BJ (cell line): ENCODE measurements at regions of chr14 and their contacts with region 1.

Region 1: GRCh38 chr14:20855652-20856291 is 35.4 kb upstream of the RNASE3 start:
- DNase-seq: no peak
- H3K4me3 ChIP-seq: no peak overlapping the region
- H3K27me3 ChIP-seq: peaks cover 6% of the 10 kb centered on the region; the same call in 1 of the 2 replicates
- CTCF ChIP-seq: peak; percentile 63

Region 2: DNA sequence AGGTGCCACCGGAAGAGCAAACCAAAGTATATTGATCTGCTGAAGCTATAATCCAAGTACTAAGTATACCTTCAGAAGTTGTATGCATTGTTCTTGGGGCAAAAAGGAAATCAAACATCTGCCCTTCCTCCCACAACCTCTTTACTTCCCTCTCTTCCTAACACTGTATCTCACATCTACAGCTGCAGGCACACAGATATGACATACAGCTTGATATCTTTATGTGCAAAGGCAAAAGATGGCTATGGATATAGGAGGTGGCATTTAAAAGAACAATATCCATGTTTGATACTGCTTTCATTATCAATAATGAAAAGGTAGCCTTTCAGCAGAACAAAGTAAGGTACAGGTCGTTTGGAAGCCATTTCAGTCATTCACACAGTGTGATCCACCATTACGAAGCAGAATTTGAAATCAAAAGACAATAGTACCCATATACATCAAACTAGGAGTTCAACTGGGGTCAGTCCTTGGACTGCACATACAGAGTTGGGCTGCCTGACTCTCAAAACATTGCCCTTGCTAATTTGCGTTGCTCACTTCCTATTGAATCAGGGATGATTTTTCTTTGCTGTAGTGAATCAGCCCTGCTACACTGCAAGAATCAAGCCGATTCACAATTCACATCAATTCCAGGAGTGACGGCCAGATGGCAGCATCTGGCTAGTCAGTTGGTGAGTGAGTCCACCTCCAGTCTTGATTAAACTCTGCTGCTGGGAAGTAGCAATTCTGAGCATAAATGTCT is 158.3 kb before region 1 on chr14:
- CTCF ChIA-PET with region 1: interaction called, 16 read pairs
- POLR2A ChIA-PET with region 1: no interaction called
- DNase-seq: no peak
- H3K4me3 ChIP-seq: no peak overlapping the region
- H3K27me3 ChIP-seq: no peaks in the 10 kb centered on the region
- CTCF ChIP-seq: peak; percentile 65

Region 3: DNA sequence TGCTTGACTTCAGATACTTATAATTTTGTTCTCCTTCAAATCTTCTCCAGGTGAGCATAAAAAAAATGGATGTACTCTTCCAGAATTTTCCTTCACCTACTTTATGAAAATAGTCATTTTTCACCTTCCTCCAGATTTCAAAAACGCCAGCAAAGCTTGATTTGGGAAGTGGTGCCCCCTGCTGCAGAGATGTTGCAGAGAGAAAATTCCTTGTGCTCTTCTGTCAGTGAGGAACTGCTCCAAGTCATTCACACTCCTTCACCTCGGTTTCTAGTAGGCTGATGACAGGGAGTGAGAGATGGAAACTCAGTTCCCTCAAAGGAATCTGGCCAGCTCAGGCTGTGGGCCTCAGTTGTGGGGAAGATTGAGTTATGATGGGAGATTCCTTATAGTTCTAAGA is 11.2 kb after region 1 on chr14:
- CTCF ChIA-PET with region 1: interaction called, 25 read pairs
- POLR2A ChIA-PET with region 1: no interaction called
- DNase-seq: no peak
- H3K4me3 ChIP-seq: no peak overlapping the region
- H3K27me3 ChIP-seq: no peaks in the 10 kb centered on the region
- CTCF ChIP-seq: peak; percentile 33

Region 4: DNA sequence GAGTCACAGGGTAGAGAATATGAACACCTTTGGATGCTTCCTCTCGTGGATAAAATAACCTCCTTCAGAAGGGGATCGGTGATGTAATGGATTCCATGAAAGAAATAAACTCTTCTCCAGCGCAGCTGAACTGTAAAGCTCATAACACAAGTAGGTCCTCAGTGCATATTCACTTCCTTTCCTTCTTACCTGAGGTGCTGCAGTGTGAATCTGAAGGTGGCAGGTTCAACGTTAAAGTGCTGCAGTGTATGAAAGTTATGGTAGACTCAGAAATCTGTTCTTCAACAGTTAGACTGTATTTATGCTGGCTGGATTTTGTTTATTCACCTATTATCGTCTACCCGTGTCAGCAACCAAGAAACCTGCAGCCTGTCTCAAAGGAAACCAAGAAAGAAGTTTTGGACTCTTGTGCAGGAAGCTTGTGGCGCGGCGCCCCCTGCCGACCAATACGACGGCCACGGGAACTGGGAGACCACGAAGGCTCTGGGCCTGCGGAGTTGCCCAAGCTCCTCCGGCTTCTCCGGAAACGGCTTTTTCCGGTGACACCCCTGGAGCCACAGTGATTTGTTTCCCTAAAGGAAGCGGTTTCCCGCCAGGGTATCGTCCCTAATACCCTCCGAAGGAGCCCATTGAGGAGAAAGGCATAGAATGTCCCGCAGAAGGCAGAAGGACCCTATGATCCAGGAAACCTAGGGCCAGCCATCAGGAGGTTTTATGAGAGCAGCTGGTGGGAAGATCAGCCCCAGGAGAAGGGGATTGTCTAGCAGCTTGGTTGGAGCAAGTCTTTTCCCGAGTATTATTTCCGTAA is 17.8 kb after region 1 on chr14:
- CTCF ChIA-PET with region 1: interaction called, 25 read pairs
- POLR2A ChIA-PET with region 1: no interaction called
- DNase-seq: no peak
- H3K4me3 ChIP-seq: no peak overlapping the region
- H3K27me3 ChIP-seq: no peaks in the 10 kb centered on the region
- CTCF ChIP-seq: peak; percentile 78

Region 5: GRCh38 chr14:21039585-21040369 is 184.0 kb after region 1 on chr14:
- CTCF ChIA-PET with region 1: interaction called, 23 read pairs
- POLR2A ChIA-PET with region 1: no interaction called
- DNase-seq: no peak
- H3K4me3 ChIP-seq: no peak overlapping the region
- H3K27me3 ChIP-seq: peaks cover 6% of the 10 kb centered on the region
- CTCF ChIP-seq: peak; percentile 59

Region 6: DNA sequence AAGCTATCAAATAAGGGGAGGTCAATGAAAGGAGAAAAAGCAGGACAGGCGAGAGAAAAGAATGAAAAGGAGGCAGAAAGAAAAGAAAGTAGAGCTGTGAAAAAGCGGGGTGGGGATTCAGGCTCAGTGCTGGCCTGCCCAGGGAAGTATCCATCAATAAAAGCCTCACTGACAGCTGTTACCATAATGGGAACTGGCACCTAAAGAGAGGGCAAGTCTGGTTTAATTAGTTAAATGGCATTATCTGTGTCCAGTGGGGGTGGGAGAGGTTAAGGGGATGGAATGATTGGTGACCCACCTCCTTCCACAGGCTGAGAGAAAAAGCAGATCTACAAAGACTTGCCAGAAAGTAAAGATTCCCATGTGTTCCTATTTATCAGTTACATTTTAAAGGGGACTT is 663.0 kb after region 1 on chr14:
- CTCF ChIA-PET with region 1: no interaction called
- POLR2A ChIA-PET with region 1: no interaction called
- DNase-seq: no peak
- H3K4me3 ChIP-seq: no peak overlapping the region
- H3K27me3 ChIP-seq: 0 out of 2 replicates have a peak, but pooled peaks cover 1% of the 10 kb centered on the region
- CTCF ChIP-seq: no peak